GM13976 (cell line): ENCODE measurements at regions of chr10 and their contacts with region 1.

Region 1: DNA sequence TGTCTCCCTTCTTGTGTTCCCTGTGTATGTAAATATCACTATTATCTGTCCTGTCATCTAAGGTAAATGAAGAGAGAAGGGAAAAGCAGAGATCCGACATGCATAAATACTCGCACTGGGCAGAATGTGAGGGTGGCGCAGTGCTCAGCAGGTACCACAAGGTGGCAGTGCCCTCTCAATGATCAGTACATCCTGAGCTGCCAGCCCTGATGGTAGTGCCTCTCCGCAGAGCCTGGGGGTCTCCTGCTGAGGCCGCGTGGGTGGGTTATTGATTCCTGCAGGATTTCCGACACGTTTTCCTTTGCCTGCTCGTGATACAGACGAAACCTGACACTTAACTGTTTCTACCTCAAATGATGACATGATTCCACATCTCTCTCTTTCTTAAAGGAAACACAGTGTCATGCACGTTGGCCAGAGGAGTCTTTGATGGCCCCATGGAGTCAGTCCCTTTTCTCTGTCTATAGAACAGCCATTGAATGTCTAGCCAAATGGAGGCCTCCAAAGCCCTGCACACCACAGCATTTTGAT is 19.8 kb downstream of the RGR start:
- DNase-seq: peak; percentile 73
- CTCF ChIP-seq: peak; percentile 96

Region 2: GRCh38 chr10:83849135-83849534 is 415.5 kb before region 1 on chr10:
- in situ Hi-C with region 1: no loop called
- DNase-seq: no peak
- CTCF ChIP-seq: no peak

Region 3: GRCh38 chr10:84352251-84352842 is 87.7 kb after region 1 on chr10:
- in situ Hi-C with region 1: loop called (anchors 10 kb)
- DNase-seq: peak; percentile 69
- CTCF ChIP-seq: peak; percentile 87

Region 4: DNA sequence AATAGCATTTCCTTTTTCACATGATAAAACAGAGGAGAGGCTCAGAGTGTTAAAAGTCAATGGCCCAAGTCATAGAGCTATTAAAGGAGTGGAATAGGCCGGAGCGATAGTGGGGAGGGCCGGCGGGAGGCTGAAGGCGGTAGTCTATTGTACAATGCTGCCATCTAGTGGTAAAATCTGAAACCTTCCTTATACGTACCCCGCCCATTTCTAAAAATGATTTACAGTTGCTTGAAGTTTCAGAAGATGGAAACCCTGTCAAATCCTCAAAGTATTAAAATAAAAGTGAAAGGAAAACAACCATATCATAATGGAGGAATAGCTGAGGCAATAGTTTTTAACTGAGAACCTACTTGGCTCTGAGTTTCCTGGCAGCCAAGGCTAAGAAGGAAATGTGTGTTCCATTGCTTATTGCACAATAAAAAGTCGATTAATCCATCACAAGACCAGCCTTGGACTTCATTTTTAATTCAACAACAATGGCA is 272.8 kb after region 1 on chr10:
- in situ Hi-C with region 1: loop called (anchors 5 kb)
- DNase-seq: peak; percentile 76
- CTCF ChIP-seq: peak; percentile 48